ENCODE measurements at regions of chr17 and their contacts with region 1.

Region 1: DNA sequence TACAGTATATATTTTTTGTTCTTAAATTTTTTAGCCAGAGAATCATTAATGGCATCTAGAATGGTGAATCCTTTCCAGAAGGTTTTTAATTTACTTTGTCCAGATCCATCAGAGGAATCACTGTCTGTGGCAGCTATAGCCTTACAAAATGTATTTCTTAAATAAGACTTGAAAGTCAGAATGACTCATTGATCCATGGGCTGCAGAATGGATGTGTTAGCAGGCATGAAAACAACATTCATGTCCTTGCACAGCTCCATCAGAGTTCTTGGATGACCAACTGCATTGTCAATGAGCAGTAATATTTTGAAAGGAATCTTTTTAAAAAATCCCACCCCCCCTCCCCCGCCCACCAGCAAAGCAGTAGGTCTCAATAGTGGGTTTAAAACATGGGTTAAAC is 51.4 kb downstream of the CACNG1 start:
- DNase-seq: no peak
- H3K4me3 ChIP-seq: no peak overlapping the region
- H3K27ac ChIP-seq: no peak overlapping the region
- H3K4me1 ChIP-seq: no peaks in the 10 kb centered on the region
- H3K27me3 ChIP-seq: no peaks in the 10 kb centered on the region
- CTCF ChIP-seq: no peak
- POLR2A ChIP-seq: no peak

Region 2: DNA sequence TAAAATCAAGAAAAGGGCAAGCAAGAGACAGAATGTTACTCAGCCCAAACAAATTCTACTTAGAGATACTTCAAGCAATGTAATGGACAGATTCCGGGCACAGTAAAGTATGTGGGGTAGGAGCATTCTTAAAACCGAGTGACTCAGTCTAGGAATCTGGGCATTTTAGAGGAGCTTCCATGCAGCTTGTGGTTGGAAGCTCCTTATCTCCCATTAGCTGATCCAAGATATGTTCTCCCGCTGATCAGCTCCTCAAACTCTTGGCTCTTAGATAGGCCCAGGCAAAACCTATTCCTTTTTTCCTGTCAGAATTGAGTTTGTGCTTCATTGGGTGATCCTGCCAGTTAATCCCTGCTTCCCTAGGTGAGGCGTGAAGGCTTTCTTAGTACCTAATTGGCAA is 1207.2 kb before region 1 on chr17:
- intact Hi-C with region 1: loop called (anchors 5 kb)
- DNase-seq: no peak
- H3K4me3 ChIP-seq: no peak overlapping the region
- H3K27ac ChIP-seq: no peak overlapping the region
- H3K4me1 ChIP-seq: no peaks in the 10 kb centered on the region
- H3K27me3 ChIP-seq: no peaks in the 10 kb centered on the region
- CTCF ChIP-seq: no peak
- POLR2A ChIP-seq: no peak

Region 3: DNA sequence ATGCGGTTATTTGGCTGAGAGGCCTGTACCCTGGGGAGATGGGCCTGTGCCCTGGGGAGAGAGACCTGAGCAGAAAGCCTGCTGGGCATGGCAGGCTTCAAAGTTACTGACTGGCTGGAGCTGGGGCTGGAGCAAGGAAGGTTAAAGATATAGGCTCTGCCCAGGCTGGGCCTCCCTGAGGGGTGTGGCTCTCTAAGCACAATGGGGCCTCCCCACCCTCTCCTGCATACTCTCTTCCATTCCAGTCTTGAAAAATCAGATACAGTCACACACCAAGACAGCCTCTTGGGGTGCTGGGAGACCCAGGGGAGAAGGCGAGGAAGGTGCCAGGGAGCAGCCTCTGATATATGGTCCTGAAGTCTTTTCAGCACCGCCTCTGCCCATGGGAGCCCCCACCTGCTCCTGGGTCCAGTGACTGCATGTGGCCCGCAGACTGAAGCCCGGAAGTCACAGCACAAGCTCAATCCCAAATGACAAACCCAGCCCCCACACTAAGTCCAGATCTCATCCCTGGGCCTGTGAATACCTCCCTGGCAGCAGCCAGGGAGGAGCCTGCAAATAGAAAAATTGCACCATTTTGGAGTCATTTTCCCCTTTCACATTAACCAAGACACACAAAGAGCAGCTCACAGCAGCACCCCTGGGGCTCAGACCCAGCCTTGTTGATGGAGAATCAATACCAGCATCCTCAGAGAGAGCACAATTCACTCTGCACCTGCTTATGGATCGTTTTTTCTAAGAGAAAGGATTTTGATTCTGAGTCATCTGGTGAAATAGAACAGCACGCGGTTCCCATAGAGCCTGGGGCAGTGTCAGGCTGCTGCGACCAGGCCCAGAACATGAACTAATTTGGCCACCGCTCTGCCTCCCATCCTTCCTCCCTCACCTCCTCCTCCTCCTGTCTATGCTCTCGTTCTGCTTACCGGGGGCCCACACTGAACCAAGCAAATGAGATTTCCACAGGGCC is 77.0 kb before region 1 on chr17:
- intact Hi-C with region 1: no loop called
- DNase-seq: no peak
- H3K4me3 ChIP-seq: no peak overlapping the region
- H3K27ac ChIP-seq: no peak overlapping the region
- H3K4me1 ChIP-seq: no peaks in the 10 kb centered on the region
- H3K27me3 ChIP-seq: no peaks in the 10 kb centered on the region
- CTCF ChIP-seq: no peak
- POLR2A ChIP-seq: no peak

Region 4: GRCh38 chr17:67035131-67036083 is 60.4 kb before region 1 on chr17:
- intact Hi-C with region 1: no loop called
- DNase-seq: no peak
- H3K4me3 ChIP-seq: no peak overlapping the region
- H3K27ac ChIP-seq: no peak overlapping the region
- H3K4me1 ChIP-seq: no peaks in the 10 kb centered on the region
- H3K27me3 ChIP-seq: no peaks in the 10 kb centered on the region
- CTCF ChIP-seq: no peak
- POLR2A ChIP-seq: no peak

Region 5: DNA sequence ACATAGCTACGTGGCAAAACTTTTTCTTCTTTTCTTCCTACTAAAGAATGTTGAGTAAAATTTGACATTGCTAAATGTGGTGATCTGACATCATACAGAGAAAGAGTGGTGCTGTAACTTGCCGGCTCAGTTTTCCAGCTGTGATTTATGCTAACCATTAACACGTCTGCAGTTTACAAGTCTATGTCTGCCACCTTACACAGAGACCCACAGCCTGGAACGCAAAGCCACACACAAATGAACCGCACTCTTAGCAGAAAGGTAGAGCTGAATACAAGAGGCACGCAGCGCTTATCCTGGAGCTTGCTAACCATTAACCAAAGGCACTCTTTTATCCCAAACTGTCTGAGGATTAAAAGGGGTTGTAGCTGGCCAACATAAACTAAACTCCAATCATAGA is 19.5 kb before region 1 on chr17:
- intact Hi-C with region 1: no loop called
- DNase-seq: no peak
- H3K4me3 ChIP-seq: no peak overlapping the region
- H3K27ac ChIP-seq: no peak overlapping the region
- H3K4me1 ChIP-seq: no peaks in the 10 kb centered on the region
- H3K27me3 ChIP-seq: no peaks in the 10 kb centered on the region
- CTCF ChIP-seq: no peak
- POLR2A ChIP-seq: no peak

Region 6: DNA sequence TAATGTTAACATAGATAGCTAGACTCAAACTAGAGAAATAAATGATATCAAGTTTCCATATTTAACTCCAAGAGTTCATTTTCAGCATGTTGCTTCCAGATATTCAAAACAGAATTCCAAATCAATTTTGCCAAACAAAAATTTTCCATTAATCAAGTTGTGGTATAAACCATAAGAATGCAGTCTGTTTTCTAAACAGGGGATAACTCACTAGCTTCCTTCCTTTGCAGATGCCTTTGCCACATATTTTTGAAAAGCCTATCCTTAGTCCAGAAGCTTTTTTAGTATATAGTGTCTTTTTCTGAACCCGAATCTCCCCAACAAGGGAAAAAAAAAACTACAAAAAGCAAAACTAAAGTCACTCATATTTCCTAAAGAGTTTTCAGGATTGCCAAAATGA is 87.7 kb after region 1 on chr17:
- intact Hi-C with region 1: no loop called
- DNase-seq: no peak
- H3K4me3 ChIP-seq: no peak overlapping the region
- H3K27ac ChIP-seq: no peak overlapping the region
- H3K4me1 ChIP-seq: no peaks in the 10 kb centered on the region
- H3K27me3 ChIP-seq: no peaks in the 10 kb centered on the region
- CTCF ChIP-seq: no peak
- POLR2A ChIP-seq: no peak